Naive thymus-derived CD4-positive, alpha-beta T cell (primary cell): ENCODE measurements at regions of chr19 and their contacts with region 1.

Region 1: DNA sequence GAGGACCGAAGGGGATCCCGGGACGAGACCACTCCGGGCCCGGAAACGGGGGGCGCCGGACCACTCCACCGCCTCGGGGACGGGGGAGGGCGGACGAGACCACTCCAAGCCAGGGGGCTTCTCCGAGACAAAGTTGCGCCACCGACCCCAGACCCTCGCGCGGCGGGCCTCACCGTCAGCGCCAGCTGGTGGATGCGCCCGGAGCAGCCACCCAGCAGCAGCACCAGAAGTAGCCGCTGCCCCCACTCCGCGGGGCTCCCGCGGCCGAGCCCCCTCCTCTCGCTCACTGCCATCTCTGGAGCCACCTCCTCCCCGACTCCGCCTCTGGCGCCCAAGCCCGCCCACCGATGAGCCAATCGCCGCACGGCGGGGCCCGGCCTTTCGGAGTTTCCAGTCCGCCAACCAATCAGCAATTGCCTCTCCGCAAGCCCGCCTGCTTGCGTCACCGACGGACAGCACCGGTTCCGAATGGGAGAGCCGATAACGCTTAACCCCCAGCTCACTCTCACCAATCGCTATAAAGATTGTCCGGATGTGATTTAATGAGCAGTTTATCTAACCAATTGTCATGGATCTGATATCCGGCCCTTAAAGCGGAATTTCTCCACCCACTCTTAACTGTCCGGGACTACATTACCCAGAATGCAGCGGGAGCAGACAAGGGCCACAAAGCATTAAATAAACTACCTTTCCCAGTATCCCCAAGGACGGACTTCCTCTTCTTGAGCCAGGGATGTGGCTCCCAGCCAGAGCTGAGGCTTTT is at the start of gene GPR108:
- DNase-seq: peak; percentile 94 to 100 (median 99)
- ATAC-seq: peak; percentile 85
- H3K4me3 ChIP-seq: peak within 1 kb of the TSS; percentile 87
- H3K4me3 Mint-ChIP-seq: peak within 1 kb of the TSS; percentile 89 to 98 (median 96)
- H3K27ac ChIP-seq: peak within 1 kb of the TSS; percentile 86
- H3K27ac Mint-ChIP-seq: peak within 1 kb of the TSS; percentile 90 to 99 (median 96)
- H3K4me1 ChIP-seq: peaks cover 31 to 32% of the 10 kb centered on the region in 2 donors
- H3K4me1 Mint-ChIP-seq: peaks cover 24 to 41% (median 37%) of the 10 kb centered on the region in 7 donors
- H3K27me3 ChIP-seq: no peaks in the 10 kb centered on the region
- H3K27me3 Mint-ChIP-seq: peaks cover 0 to 3% (median 0%) of the 10 kb centered on the region in 5 donors
- total RNA-seq, gene GPR108: 36.1 to 81.6 (median 61.9) TPM

Region 2: GRCh38 chr19:5690125-5690954 is 1047.1 kb before region 1 on chr19 and contains the start of gene RPL36:
- CTCF ChIA-PET with region 1: interaction called, 4 read pairs
- POLR2A ChIA-PET with region 1: no interaction called
- intact Hi-C with region 1: loop called in 1 of 2 experiments (anchors 10 kb)
- DNase-seq: peak; percentile 95 to 100 (median 99)
- ATAC-seq: peak; percentile 77
- H3K4me3 ChIP-seq: peak within 1 kb of the TSS; percentile 90
- H3K4me3 Mint-ChIP-seq: peak within 1 kb of the TSS; percentile 90 to 98 (median 94)
- H3K27ac ChIP-seq: peak within 1 kb of the TSS; percentile 85
- H3K27ac Mint-ChIP-seq: peak within 1 kb of the TSS; percentile 89 to 97 (median 93)
- H3K4me1 ChIP-seq: peaks cover 12 to 21% of the 10 kb centered on the region in 2 donors
- H3K4me1 Mint-ChIP-seq: peaks cover 5 to 39% (median 33%) of the 10 kb centered on the region in 7 donors
- H3K27me3 ChIP-seq: no peaks in the 10 kb centered on the region
- H3K27me3 Mint-ChIP-seq: no peaks in the 10 kb centered on the region
- total RNA-seq, gene RPL36: 865 to 1,786 (median 1,037) TPM

Region 3: DNA sequence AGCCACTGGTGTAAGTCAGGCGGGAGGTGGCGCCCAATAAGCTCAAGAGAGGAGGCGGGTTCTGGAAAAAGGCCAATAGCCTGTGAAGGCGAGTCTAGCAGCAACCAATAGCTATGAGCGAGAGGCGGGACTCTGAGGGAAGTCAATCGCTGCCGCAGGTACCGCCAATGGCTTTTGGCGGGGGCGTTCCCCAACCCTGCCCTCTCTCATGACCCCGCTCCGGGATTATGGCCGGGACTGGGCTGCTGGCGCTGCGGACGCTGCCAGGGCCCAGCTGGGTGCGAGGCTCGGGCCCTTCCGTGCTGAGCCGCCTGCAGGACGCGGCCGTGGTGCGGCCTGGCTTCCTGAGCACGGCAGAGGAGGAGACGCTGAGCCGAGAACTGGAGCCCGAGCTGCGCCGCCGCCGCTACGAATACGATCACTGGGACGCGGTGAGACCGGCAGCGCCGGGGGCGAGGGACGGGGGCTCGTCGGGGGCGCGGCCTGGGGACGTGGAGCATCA is 364.8 kb before region 1 on chr19 and contains the start of gene ALKBH7:
- CTCF ChIA-PET with region 1: no interaction called
- POLR2A ChIA-PET with region 1: no interaction called
- intact Hi-C with region 1: loop called (anchors 1 to 5 kb)
- DNase-seq: peak; percentile 82 to 99 (median 98)
- ATAC-seq: peak; percentile 83
- H3K4me3 ChIP-seq: peak within 1 kb of the TSS; percentile 89
- H3K4me3 Mint-ChIP-seq: peak within 1 kb of the TSS; percentile 82 to 92 (median 88)
- H3K27ac ChIP-seq: peak within 1 kb of the TSS; percentile 88
- H3K27ac Mint-ChIP-seq: peak within 1 kb of the TSS; percentile 66 to 95 (median 92)
- H3K4me1 ChIP-seq: peaks cover 5 to 10% of the 10 kb centered on the region in 2 donors
- H3K4me1 Mint-ChIP-seq: peaks cover 9 to 23% (median 13%) of the 10 kb centered on the region in 7 donors
- H3K27me3 ChIP-seq: no peaks in the 10 kb centered on the region
- H3K27me3 Mint-ChIP-seq: no peaks in the 10 kb centered on the region
- total RNA-seq, gene ALKBH7: 33.6 to 90.1 (median 72.9) TPM

Region 4: DNA sequence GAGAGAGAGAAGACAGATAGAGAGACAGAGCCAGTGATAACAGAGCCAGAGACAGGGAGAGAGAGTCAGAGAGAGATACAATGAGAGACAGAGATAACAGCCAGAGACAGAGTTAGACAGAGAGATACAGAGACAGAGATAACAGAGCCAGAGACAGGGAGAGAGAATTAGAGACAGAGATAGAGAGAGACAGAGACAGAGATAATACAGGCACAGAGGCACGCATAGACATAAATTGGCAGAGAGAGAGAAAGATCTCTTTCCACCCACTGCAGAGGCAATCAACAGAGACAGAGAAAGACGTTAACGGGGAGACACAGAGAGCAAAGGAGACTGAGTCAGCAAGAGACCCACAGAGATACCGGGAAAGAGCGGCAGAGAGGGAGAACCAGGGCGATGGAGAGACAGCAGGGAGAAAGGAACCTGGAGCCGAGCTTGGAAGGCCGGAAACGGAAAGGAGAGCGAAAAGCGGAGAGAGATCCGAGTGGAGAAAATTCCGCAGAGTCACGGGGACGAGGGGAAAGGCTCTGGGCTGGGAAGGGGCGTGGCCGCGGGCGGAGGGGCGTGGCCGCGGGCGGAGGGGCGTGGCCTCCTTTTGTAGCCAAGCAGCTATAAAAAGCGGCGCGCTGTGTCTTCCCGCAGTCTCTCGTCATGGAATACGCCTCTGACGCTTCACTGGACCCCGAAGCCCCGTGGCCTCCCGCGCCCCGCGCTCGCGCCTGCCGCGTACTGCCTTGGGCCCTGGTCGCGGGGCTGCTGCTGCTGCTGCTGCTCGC is 206.9 kb before region 1 on chr19 and contains the start of gene TNFSF9:
- CTCF ChIA-PET with region 1: no interaction called
- POLR2A ChIA-PET with region 1: no interaction called
- intact Hi-C with region 1: loop called in 1 of 2 experiments (anchors 5 kb)
- DNase-seq: peak; percentile 51 to 93 (median 65)
- ATAC-seq: peak; percentile 90
- H3K4me3 ChIP-seq: peak within 1 kb of the TSS; percentile 36
- H3K4me3 Mint-ChIP-seq: peak within 1 kb of the TSS; percentile 81 to 93 (median 86)
- H3K27ac ChIP-seq: peak within 1 kb of the TSS; percentile 58
- H3K27ac Mint-ChIP-seq: peak within 1 kb of the TSS; percentile 9 to 85 (median 64)
- H3K4me1 ChIP-seq: peaks cover 20 to 27% of the 10 kb centered on the region in 2 donors
- H3K4me1 Mint-ChIP-seq: peaks cover 33 to 43% (median 37%) of the 10 kb centered on the region in 7 donors
- H3K27me3 ChIP-seq: peaks cover 0 to 16% of the 10 kb centered on the region in 2 donors
- H3K27me3 Mint-ChIP-seq: peaks cover 27 to 46% (median 28%) of the 10 kb centered on the region in 5 donors
- total RNA-seq, gene TNFSF9: 0.38 to 3.9 (median 3.0) TPM in 4 of 5 experiments, not detected in the other

Region 5: GRCh38 chr19:6564393-6564792 is 173.1 kb before region 1 on chr19:
- CTCF ChIA-PET with region 1: no interaction called
- POLR2A ChIA-PET with region 1: no interaction called
- intact Hi-C with region 1: no loop called
- DNase-seq: peak in 1 of 9 donors; percentile 23
- ATAC-seq: no peak
- H3K4me3 ChIP-seq: no peak overlapping the region
- H3K4me3 Mint-ChIP-seq: no peak overlapping the region
- H3K27ac ChIP-seq: no peak overlapping the region
- H3K27ac Mint-ChIP-seq: peak overlapping the region in 1 of 9 donors; percentile 28
- H3K4me1 ChIP-seq: no peaks in the 10 kb centered on the region
- H3K4me1 Mint-ChIP-seq: peaks cover 0 to 3% (median 0%) of the 10 kb centered on the region in 7 donors
- H3K27me3 ChIP-seq: no peaks in the 10 kb centered on the region
- H3K27me3 Mint-ChIP-seq: peaks cover 12 to 24% (median 14%) of the 10 kb centered on the region in 5 donors

Region 6: GRCh38 chr19:6674868-6675305 is 62.6 kb before region 1 on chr19:
- CTCF ChIA-PET with region 1: interaction called, 3 read pairs
- POLR2A ChIA-PET with region 1: no interaction called
- intact Hi-C with region 1: loop called (anchors 1 to 2 kb)
- DNase-seq: peak; percentile 21 to 90 (median 54)
- ATAC-seq: peak; percentile 77
- H3K4me3 ChIP-seq: peak overlapping the region; percentile 48
- H3K4me3 Mint-ChIP-seq: peak overlapping the region in 4 of 10 donors; percentile 4 to 82 (median 32)
- H3K27ac ChIP-seq: no peak overlapping the region
- H3K27ac Mint-ChIP-seq: peak overlapping the region in 2 of 9 donors; percentile 46 to 88
- H3K4me1 ChIP-seq: peaks cover 22 to 34% of the 10 kb centered on the region in 2 donors
- H3K4me1 Mint-ChIP-seq: peaks cover 27 to 65% (median 41%) of the 10 kb centered on the region in 7 donors
- H3K27me3 ChIP-seq: no peaks in the 10 kb centered on the region
- H3K27me3 Mint-ChIP-seq: no peaks in the 10 kb centered on the region

Region 7: GRCh38 chr19:6820237-6820636 is 82.8 kb after region 1 on chr19:
- CTCF ChIA-PET with region 1: no interaction called
- POLR2A ChIA-PET with region 1: no interaction called
- intact Hi-C with region 1: no loop called
- DNase-seq: no peak
- ATAC-seq: no peak
- H3K4me3 ChIP-seq: no peak overlapping the region
- H3K4me3 Mint-ChIP-seq: no peak overlapping the region
- H3K27ac ChIP-seq: no peak overlapping the region
- H3K27ac Mint-ChIP-seq: peak overlapping the region in 1 of 9 donors; percentile 81
- H3K4me1 ChIP-seq: peaks cover 0 to 3% of the 10 kb centered on the region in 2 donors
- H3K4me1 Mint-ChIP-seq: peaks cover 8 to 32% (median 21%) of the 10 kb centered on the region in 7 donors
- H3K27me3 ChIP-seq: no peaks in the 10 kb centered on the region
- H3K27me3 Mint-ChIP-seq: no peaks in the 10 kb centered on the region

Region 8: DNA sequence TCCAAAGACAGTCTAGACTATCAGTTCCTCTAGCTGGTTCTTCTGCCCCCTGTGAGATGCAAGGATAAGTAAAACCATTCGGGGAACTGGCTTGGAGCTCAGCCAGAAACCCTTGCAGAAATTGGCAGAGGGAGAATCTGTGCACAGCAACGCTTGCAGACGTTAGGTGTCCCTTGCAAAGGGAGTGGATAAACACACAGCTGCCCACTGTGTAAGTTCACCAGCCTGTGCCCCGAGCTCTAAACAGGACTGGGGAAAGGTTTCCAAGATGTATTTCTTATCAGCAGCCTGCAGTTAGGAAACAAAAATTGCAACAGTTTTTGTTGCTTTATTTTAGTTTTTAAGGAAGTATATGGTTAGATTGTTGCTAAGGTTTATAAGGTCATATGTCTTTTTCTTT is 130.9 kb after region 1 on chr19:
- CTCF ChIA-PET with region 1: interaction called, 64 read pairs
- POLR2A ChIA-PET with region 1: interaction called, 35 read pairs
- intact Hi-C with region 1: loop called (anchors 1 kb)
- DNase-seq: no peak
- ATAC-seq: peak; percentile 30
- H3K4me3 ChIP-seq: no peak overlapping the region
- H3K4me3 Mint-ChIP-seq: peak overlapping the region in 8 of 10 donors; percentile 11 to 55 (median 29)
- H3K27ac ChIP-seq: peak overlapping the region; percentile 1
- H3K27ac Mint-ChIP-seq: peak overlapping the region in 6 of 9 donors; percentile 28 to 90 (median 76)
- H3K4me1 ChIP-seq: peaks cover 0 to 10% of the 10 kb centered on the region in 2 donors
- H3K4me1 Mint-ChIP-seq: peaks cover 3 to 50% (median 34%) of the 10 kb centered on the region in 7 donors
- H3K27me3 ChIP-seq: no peaks in the 10 kb centered on the region
- H3K27me3 Mint-ChIP-seq: no peaks in the 10 kb centered on the region

Region 9: GRCh38 chr19:6911516-6911915 is 174.1 kb after region 1 on chr19:
- CTCF ChIA-PET with region 1: no interaction called
- POLR2A ChIA-PET with region 1: no interaction called
- intact Hi-C with region 1: no loop called
- DNase-seq: no peak
- ATAC-seq: no peak
- H3K4me3 ChIP-seq: no peak overlapping the region
- H3K4me3 Mint-ChIP-seq: no peak overlapping the region
- H3K27ac ChIP-seq: no peak overlapping the region
- H3K27ac Mint-ChIP-seq: peak overlapping the region in 2 of 9 donors; percentile 9 to 39
- H3K4me1 ChIP-seq: no peaks in the 10 kb centered on the region
- H3K4me1 Mint-ChIP-seq: peaks cover 0 to 15% (median 4%) of the 10 kb centered on the region in 7 donors
- H3K27me3 ChIP-seq: no peaks in the 10 kb centered on the region
- H3K27me3 Mint-ChIP-seq: no peaks in the 10 kb centered on the region

Region 10: GRCh38 chr19:7340959-7341837 is 603.7 kb after region 1 on chr19:
- CTCF ChIA-PET with region 1: no interaction called
- POLR2A ChIA-PET with region 1: no interaction called
- intact Hi-C with region 1: loop called in 1 of 2 experiments (anchors 10 kb)
- DNase-seq: peak; percentile 65 to 91 (median 77)
- ATAC-seq: peak; percentile 60
- H3K4me3 ChIP-seq: no peak overlapping the region
- H3K4me3 Mint-ChIP-seq: peak overlapping the region in 7 of 10 donors; percentile 11 to 74 (median 39)
- H3K27ac ChIP-seq: no peak overlapping the region
- H3K27ac Mint-ChIP-seq: peak overlapping the region; percentile 14 to 95 (median 86)
- H3K4me1 ChIP-seq: peaks cover 37 to 39% of the 10 kb centered on the region in 2 donors
- H3K4me1 Mint-ChIP-seq: peaks cover 29 to 64% (median 59%) of the 10 kb centered on the region in 7 donors
- H3K27me3 ChIP-seq: no peaks in the 10 kb centered on the region
- H3K27me3 Mint-ChIP-seq: peaks cover 0 to 12% (median 0%) of the 10 kb centered on the region in 5 donors